HEK293T (cell line): ENCODE measurements at regions of chr12 and their contacts with region 1.

Region 1: GRCh38 chr12:6890789-6891645 is 13.6 kb upstream of the LRRC23 start:
- DNase-seq: peak; percentile 97

Region 2: GRCh38 chr12:6688999-6689882 is 201.8 kb before region 1 on chr12 and contains the start of gene ZNF384:
- CTCF ChIA-PET with region 1: no interaction called
- POLR2A ChIA-PET with region 1: no interaction called
- DNase-seq: peak; percentile 95

Region 3: GRCh38 chr12:6867413-6868210 is 23.4 kb before region 1 on chr12 and contains the start of gene TPI1:
- CTCF ChIA-PET with region 1: interaction called, 24 read pairs
- POLR2A ChIA-PET with region 1: interaction called, 55 read pairs
- DNase-seq: peak; percentile 91

Region 4: GRCh38 chr12:6904280-6905278 is 13.6 kb after region 1 on chr12 and contains the start of gene LRRC23:
- CTCF ChIA-PET with region 1: interaction called, 10 read pairs
- POLR2A ChIA-PET with region 1: interaction called, 34 read pairs
- DNase-seq: peak; percentile 89

Region 5: DNA sequence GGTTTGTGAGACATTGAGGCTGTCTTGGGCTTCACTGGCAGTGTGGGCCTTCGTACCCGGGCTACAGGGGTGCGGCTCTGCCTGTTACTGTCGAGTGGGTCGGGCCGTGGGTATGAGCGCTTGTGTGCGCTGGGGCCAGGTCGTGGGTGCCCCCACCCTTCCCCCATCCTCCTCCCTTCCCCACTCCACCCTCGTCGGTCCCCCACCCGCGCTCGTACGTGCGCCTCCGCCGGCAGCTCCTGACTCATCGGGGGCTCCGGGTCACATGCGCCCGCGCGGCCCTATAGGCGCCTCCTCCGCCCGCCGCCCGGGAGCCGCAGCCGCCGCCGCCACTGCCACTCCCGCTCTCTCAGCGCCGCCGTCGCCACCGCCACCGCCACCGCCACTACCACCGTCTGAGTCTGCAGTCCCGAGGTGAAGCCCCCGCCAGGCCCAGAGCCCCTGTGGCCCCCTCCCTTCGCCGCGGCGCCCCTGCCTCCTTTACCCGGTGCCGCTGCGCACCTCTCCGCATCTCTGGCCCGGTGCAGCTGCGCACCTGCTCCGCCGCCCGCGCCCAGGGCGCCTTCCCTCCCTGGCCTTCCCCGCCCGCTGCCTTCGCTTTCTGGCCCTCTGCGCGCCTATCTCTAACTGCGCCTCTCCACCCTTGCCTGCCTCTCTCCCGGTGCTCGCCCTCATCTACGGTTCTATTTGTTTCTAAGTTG is 23.4 kb after region 1 on chr12 and contains the start of gene ENO2:
- CTCF ChIA-PET with region 1: interaction called, 5 read pairs
- POLR2A ChIA-PET with region 1: interaction called, 23 read pairs
- DNase-seq: no peak